HEK293 (cell line): ENCODE measurements at regions of chr7 and their contacts with region 1.

Region 1: GRCh38 chr7:142301923-142302550 is 44.2 kb upstream of the PRSS58 start:
- H3K4me3 ChIP-seq: no peak overlapping the region
- H3K27ac ChIP-seq: no peak overlapping the region
- H3K4me1 ChIP-seq: no peaks in the 10 kb centered on the region
- CTCF ChIP-seq: no peak

Region 2: DNA sequence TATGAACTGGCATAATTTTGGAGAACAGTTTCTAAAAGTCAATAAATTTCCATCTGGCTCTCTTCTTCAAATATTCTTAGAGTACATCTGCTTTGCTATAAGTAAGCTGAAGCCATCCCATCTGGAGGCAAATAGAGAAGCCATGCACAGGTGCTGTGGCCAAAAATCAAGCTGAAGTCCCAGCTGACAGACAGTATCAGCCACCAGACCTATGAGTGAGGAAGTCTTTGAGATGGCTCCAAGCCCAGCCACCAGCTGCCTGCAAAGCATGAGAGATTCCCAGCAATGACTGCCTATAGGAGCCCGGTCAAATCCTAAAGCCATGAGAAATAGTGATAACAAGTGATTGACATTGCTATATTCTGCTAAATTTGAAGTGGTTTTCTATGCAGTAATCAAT is 22.4 kb before region 1 on chr7:
- CTCF ChIA-PET with region 1: interaction called, 16 read pairs
- POLR2A ChIA-PET with region 1: no interaction called
- H3K4me3 ChIP-seq: no peak overlapping the region
- H3K27ac ChIP-seq: no peak overlapping the region
- H3K4me1 ChIP-seq: 0 out of 2 replicates have a peak, but pooled peaks cover 3% of the 10 kb centered on the region
- CTCF ChIP-seq: no peak

Region 3: DNA sequence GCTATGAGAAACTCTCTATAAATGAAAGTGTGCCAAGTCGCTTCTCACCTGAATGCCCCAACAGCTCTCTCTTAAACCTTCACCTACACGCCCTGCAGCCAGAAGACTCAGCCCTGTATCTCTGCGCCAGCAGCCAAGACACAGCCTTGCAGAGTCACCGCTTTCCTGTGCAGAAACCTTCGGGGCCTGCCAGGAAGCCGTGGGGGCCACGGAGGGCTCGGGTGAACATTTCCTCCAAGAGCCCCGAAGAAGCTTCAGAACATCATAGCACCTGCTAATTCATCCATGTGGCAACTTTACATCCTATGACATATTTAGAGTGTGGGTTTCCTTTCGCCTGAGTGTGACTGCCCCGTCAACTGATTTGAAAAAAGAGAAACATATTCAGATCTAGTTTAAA is 11.5 kb after region 1 on chr7:
- CTCF ChIA-PET with region 1: interaction called, 27 read pairs
- POLR2A ChIA-PET with region 1: interaction called, 5 read pairs
- H3K4me3 ChIP-seq: no peak overlapping the region
- H3K27ac ChIP-seq: no peak overlapping the region
- H3K4me1 ChIP-seq: no peaks in the 10 kb centered on the region
- CTCF ChIP-seq: no peak